BJ (cell line): ENCODE measurements at regions of chr2 and their contacts with region 1.

Region 1: GRCh38 chr2:207603486-207603885 is 21.7 kb downstream of the METTL21A start:
- DNase-seq: no peak
- H3K4me3 ChIP-seq: no peak overlapping the region
- H3K27me3 ChIP-seq: no peaks in the 10 kb centered on the region
- CTCF ChIP-seq: no peak

Region 2: DNA sequence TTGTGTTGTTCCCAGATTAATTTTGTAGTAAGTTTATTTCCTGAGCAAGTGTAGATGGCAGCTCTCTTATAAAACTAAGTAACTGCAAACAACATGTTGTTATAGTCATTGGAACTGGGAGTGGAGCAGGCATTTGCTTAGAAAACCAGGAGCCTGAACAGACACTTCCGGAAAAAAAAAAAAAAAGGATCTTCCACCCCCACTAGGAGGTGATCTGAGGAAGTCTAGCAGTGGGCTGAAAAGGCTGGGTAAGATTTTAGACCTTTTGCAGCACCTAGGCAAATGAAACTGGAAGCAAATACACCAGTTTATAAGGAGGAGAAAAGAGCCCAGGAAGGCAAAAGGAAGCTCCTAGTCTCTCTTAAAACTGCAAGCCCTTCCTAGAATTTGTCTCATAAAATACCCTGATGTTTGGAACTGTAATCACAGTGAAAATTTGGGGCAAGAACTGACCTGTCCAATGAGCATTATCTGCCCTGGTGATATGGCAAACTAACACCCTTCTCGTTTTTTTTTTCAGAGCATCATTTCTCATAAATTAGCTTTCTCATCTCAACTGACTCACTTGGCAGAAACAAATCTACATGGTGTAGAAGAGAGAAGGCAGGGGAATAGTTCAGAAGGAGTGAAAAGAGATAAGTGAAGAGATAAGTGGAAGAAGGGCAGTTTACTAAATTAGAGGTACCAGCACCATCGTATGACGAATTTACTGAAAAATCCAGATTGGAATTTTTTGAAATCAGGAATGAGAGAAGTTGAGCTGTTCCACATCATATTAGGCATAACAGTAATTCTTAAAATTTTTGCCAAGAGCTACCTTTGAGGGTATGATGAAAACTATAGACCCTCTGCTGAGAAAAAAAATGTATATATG is 103.7 kb after region 1 on chr2:
- CTCF ChIA-PET with region 1: no interaction called
- POLR2A ChIA-PET with region 1: interaction called, 22 read pairs
- DNase-seq: no peak
- H3K4me3 ChIP-seq: no peak overlapping the region
- H3K27me3 ChIP-seq: peaks cover 2% of the 10 kb centered on the region; the same call in 1 of the 2 replicates
- CTCF ChIP-seq: no peak